ENCODE measurements at regions of chr7 and their contacts with region 1.

Region 1: GRCh38 chr7:23712368-23713284 is 2.6 kb downstream of the STK31 start:
- DNase-seq: no peak
- ATAC-seq: peak; percentile 68
- H3K4me3 ChIP-seq: no peak overlapping the region
- H3K27ac ChIP-seq: no peak overlapping the region
- H3K4me1 ChIP-seq: peaks cover 17% of the 10 kb centered on the region
- H3K27me3 ChIP-seq: no peaks in the 10 kb centered on the region
- CTCF ChIP-seq: peak; percentile 38 to 88 (median 78)
- POLR2A ChIP-seq: no peak

Region 2: DNA sequence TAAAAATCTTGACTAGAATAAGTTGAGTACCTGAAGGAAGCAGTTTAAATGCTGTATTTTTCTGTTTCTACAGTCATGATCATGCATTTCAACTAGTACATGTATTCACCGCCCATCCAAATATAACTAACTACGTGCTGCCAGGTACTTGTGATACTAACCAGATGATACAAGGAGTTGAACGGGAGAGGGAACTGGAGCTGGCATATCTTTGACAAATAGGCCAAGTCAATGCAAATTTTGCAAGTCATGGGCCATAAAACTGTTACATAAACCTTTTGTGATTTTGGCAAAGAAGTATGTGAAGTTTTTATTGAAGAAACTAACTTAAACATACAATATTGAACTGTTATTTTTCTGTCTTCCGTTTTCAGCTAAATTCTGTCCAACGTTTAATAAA is 516.3 kb before region 1 on chr7:
- intact Hi-C with region 1: no loop called
- DNase-seq: no peak
- ATAC-seq: no peak
- H3K4me3 ChIP-seq: no peak overlapping the region
- H3K27ac ChIP-seq: no peak overlapping the region
- H3K4me1 ChIP-seq: no peaks in the 10 kb centered on the region
- H3K27me3 ChIP-seq: no peaks in the 10 kb centered on the region
- CTCF ChIP-seq: no peak
- POLR2A ChIP-seq: no peak

Region 3: GRCh38 chr7:23570592-23571200 is 141.9 kb before region 1 on chr7:
- intact Hi-C with region 1: loop called (anchors 5 kb)
- DNase-seq: peak; percentile 79 to 88 (median 82)
- ATAC-seq: peak; percentile 95
- H3K4me3 ChIP-seq: no peak overlapping the region
- H3K27ac ChIP-seq: no peak overlapping the region
- H3K4me1 ChIP-seq: no peaks in the 10 kb centered on the region
- H3K27me3 ChIP-seq: no peaks in the 10 kb centered on the region
- CTCF ChIP-seq: peak; percentile 61 to 95 (median 91)
- POLR2A ChIP-seq: no peak

Region 4: DNA sequence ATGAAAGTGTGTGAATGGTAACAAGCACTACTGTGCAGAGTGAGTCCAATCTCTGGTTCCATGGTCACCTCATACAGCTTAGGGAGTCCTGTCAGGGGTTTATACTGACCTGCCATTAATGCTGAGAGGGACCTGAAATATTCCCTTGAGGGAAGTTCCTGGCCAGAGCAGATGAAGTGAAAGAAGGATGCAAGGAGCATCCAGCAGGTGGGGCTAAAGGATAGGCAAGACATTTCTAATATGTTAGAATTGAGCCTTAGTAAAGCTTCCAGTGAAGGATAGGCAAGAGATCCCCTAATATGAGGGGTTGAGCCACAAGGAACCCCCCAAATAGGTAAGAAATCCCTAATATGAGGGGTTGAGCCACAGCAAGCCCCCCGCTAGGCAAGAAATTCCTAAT is 58.1 kb before region 1 on chr7:
- intact Hi-C with region 1: loop called (anchors 10 kb)
- DNase-seq: peak; percentile 76 to 82 (median 78)
- ATAC-seq: peak; percentile 82
- H3K4me3 ChIP-seq: no peak overlapping the region
- H3K27ac ChIP-seq: no peak overlapping the region
- H3K4me1 ChIP-seq: no peaks in the 10 kb centered on the region
- H3K27me3 ChIP-seq: no peaks in the 10 kb centered on the region
- CTCF ChIP-seq: peak; percentile 45 to 82 (median 73)
- POLR2A ChIP-seq: no peak